A549 (cell line): ENCODE measurements at regions of chr2 and their contacts with region 1.

Region 1: DNA sequence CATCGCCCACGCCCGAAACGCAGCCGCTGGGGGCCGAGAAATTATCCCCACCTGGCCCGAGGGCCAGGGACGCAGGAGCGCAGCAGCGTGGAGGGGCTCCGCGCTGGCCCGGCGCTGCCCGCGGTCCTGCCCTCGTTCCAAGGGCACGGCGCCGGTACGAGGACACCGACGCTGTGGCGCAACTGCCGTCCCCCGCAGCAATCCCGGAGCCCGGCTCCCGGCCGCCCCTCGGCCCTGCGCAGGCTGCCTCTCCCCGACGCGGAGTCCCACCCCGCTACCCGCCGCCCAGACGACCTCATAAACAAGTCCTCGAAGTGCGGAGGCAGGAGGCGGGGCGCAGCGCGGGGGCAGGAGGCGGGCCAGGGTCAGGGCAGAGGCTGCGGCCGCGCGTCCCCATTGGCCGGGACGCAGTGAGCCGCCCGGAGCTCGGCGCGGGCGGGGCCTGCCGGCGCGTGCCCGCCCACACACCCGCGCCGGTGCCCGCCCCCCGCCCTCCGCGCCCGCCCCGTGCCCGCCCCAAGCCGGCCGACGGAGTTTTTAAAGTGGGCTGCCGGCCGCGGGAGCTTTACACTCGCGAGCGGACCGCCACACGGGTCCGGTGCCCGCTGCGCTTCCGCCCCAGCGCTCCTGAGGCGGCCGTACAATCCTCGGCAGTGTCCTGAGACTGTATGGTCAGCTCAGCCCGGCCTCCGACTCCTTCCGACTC is at the start of gene EPAS1:
- DNase-seq: peak; percentile 89 to 96
- ATAC-seq: peak; percentile 74 to 79
- H3K4me3 ChIP-seq: peak within 1 kb of the TSS; percentile 92
- H3K27ac ChIP-seq: peak within 1 kb of the TSS; percentile 81 to 91
- H3K4me1 ChIP-seq: peaks cover 41% of the 10 kb centered on the region
- CTCF ChIP-seq: no peak
- EP300 ChIP-seq: no peak
- POLR2A ChIP-seq: peak; percentile 94
- RAD21 ChIP-seq: no peak; a peak in 1 of 5 replicates
- polyA plus RNA-seq, gene EPAS1: 143 and 150 TPM in 2 replicates

Region 2: GRCh38 chr2:46010925-46011490 is 286.0 kb before region 1 on chr2:
- CTCF ChIA-PET with region 1: interaction called, 10 read pairs
- POLR2A ChIA-PET with region 1: no interaction called
- DNase-seq: peak; percentile 62 to 72
- ATAC-seq: peak; percentile 73 to 92; a peak in 5 of 6 replicates
- H3K4me3 ChIP-seq: no peak overlapping the region
- H3K27ac ChIP-seq: peak overlapping the region; percentile 12 to 56; a peak in 4 of 6 replicates
- H3K4me1 ChIP-seq: peaks cover 19% of the 10 kb centered on the region
- CTCF ChIP-seq: peak; percentile 96
- EP300 ChIP-seq: no peak
- POLR2A ChIP-seq: no peak
- RAD21 ChIP-seq: peak; percentile 94 to 98

Region 3: GRCh38 chr2:46315103-46315890 is 18.3 kb after region 1 on chr2:
- CTCF ChIA-PET with region 1: interaction called, 12 read pairs
- POLR2A ChIA-PET with region 1: interaction called, 6 read pairs
- DNase-seq: peak; percentile 95 to 98
- ATAC-seq: peak; percentile 90 to 94
- H3K4me3 ChIP-seq: peak overlapping the region; percentile 18; the same call in 2 of the 3 replicates
- H3K27ac ChIP-seq: peak overlapping the region; percentile 85 to 92
- H3K4me1 ChIP-seq: peaks cover 95% of the 10 kb centered on the region
- CTCF ChIP-seq: no peak
- EP300 ChIP-seq: peak; percentile 87 to 92; a peak in 3 of 5 replicates
- POLR2A ChIP-seq: 0 out of 2 replicates have a peak, but pooled peaks have one; percentile 3
- RAD21 ChIP-seq: peak; percentile 23 to 68; a peak in 4 of 5 replicates

Region 4: DNA sequence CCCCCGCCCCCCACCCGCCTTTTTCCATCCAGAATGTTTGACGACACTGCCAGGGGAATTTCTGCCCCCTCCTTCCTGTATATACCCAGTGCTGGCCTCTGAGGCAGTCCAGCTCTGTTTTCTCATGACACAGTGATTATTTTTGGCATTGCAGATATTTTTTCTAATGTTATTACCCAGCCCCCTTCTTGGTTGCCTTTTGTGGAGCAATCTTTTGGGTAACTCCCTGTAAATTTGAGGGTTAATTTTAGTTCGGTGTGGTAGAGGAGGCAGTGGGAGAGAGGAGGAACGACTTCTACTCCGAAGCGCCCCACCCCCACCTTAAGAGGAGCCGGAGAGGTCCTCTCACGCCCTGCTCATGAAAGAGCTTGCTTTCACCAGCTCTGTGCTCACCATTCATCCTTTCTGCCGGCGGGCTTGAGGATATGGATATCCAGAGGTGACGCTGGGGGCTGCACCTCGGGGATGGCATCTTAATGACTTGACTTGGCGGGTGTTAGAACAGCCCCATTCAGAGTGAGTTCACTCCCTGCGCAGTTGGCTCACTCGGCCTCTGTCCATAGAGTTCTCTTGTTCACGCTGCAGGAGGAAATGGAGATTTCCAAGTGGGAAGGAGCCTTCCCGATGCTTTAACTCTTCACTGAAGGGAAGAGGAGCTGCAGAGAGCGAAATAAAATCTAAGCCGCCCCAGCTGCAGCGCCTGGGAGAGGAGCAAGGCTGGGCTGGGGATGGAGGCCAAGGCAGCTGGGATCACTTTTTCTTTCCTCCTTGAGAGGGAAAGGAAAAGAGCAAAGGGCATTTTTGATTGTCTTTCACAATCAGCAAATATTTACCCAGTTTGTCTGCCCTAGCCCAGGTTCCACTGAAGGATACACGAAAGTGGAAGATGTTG is 38.6 kb after region 1 on chr2:
- CTCF ChIA-PET with region 1: interaction called, 6 read pairs
- POLR2A ChIA-PET with region 1: interaction called, 10 read pairs
- DNase-seq: peak; percentile 60 to 82
- ATAC-seq: peak; percentile 57 to 65
- H3K4me3 ChIP-seq: peak overlapping the region; percentile 37
- H3K27ac ChIP-seq: peak overlapping the region; percentile 88 to 89
- H3K4me1 ChIP-seq: peaks cover 98% of the 10 kb centered on the region
- CTCF ChIP-seq: no peak
- EP300 ChIP-seq: peak; percentile 59 to 70; a peak in 2 of 5 replicates
- POLR2A ChIP-seq: no peak
- RAD21 ChIP-seq: peak in 1 of 2 experiments; percentile 16; a peak in 3 of 5 replicates

Region 5: DNA sequence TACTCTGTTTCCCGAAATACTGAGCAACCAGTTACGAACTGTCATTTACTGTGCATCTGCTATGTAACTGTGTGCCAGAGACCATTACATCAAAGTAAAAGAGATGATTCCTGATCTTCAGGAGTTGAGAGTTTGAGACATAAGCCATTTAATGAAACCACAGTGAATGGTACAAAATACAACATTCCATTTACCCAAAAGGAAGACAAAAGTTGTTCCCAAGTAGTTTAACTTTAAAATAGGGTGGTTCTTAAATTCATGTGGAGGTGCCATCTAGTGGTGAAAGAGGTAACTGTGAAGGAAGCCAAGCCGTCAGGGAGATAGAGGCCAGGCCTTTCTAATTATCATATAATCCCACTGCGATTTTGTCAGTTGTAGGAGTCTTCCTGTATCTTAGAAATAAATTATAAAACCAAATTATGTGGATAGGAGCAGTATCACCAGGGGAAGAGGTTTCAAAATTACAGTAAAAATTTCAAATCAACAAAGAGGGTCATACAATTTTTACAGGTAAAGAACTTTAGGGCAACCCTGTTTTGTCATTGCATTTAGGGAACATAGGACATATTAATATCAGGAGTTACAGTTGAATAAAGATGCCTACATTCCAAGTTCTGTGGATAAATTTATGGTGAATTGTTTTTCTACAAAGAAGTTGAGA is 67.9 kb after region 1 on chr2:
- CTCF ChIA-PET with region 1: interaction called, 13 read pairs
- POLR2A ChIA-PET with region 1: no interaction called
- DNase-seq: peak; percentile 50 to 71
- ATAC-seq: peak in 1 of 2 experiments; percentile 70; a peak in 3 of 6 replicates
- H3K4me3 ChIP-seq: no peak overlapping the region
- H3K27ac ChIP-seq: peak overlapping the region in 1 of 2 experiments; percentile 60; a peak in 2 of 6 replicates
- H3K4me1 ChIP-seq: peaks cover 27% of the 10 kb centered on the region
- CTCF ChIP-seq: peak; percentile 94
- EP300 ChIP-seq: no peak
- POLR2A ChIP-seq: no peak
- RAD21 ChIP-seq: peak; percentile 94 to 96

Region 6: GRCh38 chr2:46377176-46377581 is 80.2 kb after region 1 on chr2:
- CTCF ChIA-PET with region 1: interaction called, 12 read pairs
- POLR2A ChIA-PET with region 1: no interaction called
- DNase-seq: peak in 1 of 2 experiments; percentile 36
- ATAC-seq: peak in 1 of 2 experiments; percentile 64; a peak in 3 of 6 replicates
- H3K4me3 ChIP-seq: no peak overlapping the region
- H3K27ac ChIP-seq: no peak overlapping the region
- H3K4me1 ChIP-seq: no peaks in the 10 kb centered on the region
- CTCF ChIP-seq: peak; percentile 28; the same call in 2 of the 3 replicates
- EP300 ChIP-seq: no peak
- POLR2A ChIP-seq: no peak
- RAD21 ChIP-seq: peak; percentile 47 to 55; a peak in 4 of 5 replicates

Region 7: GRCh38 chr2:46499392-46499785 is 202.4 kb after region 1 on chr2:
- CTCF ChIA-PET with region 1: no interaction called
- POLR2A ChIA-PET with region 1: no interaction called
- DNase-seq: no peak
- ATAC-seq: peak; percentile 3 to 14; a peak in 3 of 6 replicates
- H3K4me3 ChIP-seq: peak overlapping the region; percentile 66
- H3K27ac ChIP-seq: peak overlapping the region; percentile 65 to 76
- H3K4me1 ChIP-seq: peaks cover 10% of the 10 kb centered on the region; the same call in 2 of the 3 replicates
- CTCF ChIP-seq: no peak
- EP300 ChIP-seq: no peak
- POLR2A ChIP-seq: no peak
- RAD21 ChIP-seq: no peak